GM10248 (cell line): ENCODE measurements at regions of chr7 and their contacts with region 1.

Region 1: DNA sequence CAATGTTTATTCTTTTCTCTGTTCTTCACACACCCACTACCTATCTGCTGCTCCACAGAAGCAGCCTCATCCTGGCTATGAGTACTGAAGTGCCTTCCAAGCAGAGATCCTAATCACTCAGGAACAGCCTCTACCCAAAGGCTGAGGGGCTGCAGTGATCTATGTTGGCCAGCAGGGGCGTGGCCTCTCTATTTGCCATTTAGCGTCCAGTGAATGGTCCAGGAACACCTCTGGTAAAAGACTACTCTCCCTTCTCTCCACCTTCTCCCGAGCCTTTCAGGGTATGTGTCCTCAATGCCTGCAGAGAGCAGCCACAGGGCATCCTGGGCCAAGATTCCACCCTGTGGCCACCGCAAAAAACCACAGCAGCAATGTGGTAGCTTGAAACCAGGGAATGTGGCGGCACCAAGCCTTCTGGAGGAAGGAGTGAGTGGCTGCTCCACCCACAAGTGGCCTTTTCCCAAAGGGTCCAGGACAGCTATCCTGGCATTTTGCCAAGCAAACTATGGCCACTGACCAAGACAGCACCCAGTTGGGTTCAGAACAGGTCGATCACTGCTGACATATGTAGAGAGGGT is 70.9 kb downstream of the SYPL1 start:
- DNase-seq: peak; percentile 66
- CTCF ChIP-seq: peak; percentile 58

Region 2: DNA sequence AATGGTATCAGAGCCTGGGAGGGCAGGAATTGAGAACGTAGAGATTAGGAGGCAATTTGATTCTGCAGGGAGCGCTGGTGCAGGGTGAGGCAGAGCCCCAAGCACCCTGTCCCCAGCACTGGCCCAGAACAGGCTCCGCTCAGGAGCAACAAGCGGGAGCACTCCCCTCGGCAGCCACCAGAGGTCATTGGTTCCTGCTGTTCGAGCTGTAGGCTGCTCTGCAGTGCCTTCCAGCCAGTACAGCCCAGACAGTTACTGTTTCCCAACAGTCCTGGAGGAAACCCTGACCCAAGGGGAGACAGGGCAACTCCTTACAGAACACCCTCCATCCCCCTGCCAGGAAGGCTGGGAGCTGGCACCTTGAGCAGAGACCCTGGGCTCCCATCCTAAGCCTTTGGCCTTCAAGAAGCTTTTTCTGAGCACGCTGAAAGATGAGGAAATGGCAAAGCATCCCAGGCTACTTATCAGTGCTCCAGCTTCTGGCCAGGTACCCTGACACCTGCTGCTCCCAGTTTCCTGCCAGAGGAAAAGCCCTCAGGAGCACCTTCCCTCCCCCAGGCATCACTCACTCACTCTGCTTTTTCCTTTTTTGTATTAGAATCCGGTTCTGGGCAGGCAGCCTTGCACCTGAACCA is 388.8 kb before region 1 on chr7:
- CTCF ChIA-PET with region 1: interaction called, 26 read pairs
- POLR2A ChIA-PET with region 1: no interaction called
- DNase-seq: peak; percentile 78
- CTCF ChIP-seq: peak; percentile 75

Region 3: DNA sequence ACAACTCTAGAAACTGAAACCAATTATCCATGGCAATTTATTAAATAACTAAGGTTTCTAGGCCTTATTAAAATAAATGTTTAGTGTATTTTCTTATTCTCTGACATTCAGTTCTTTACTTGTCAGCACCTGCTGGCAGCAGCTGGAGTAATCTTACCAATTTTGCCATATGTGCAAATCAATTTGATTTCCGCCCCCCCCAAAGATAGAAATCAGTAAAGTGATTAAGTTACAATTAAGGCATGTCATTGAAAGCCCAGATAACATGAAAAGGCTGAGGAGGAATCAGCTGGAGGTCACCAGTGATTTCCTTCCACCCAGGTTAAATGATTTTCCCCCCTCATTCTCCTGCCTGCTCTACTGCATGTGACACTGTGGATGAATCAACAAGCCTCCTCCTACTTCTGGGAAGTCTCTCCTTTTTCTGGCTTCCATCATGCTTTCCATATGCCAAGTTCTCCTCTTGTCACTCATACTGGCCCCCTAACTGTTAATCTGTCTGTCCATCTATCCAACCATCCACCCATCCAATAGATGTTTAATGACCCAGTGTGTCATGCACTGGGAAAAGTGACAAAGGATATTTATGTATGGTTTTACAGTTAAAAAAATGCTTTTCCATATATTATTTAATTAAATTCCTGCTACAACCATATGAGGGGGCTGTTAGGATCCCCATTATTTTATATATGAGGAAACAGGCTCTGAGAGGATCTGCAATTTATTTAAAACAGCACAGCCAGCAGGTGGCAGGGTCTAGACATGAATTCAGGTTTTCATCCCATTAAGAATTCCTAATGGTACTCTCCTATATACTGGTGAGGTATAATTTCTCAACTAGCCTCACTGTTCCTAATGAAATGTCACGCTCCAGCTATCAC is 281.3 kb before region 1 on chr7:
- CTCF ChIA-PET with region 1: interaction called, 61 read pairs
- POLR2A ChIA-PET with region 1: no interaction called
- DNase-seq: peak; percentile 22
- CTCF ChIP-seq: peak; percentile 62

Region 4: GRCh38 chr7:106023369-106024322 is 17.6 kb before region 1 on chr7:
- CTCF ChIA-PET with region 1: interaction called, 35 read pairs
- POLR2A ChIA-PET with region 1: no interaction called
- DNase-seq: no peak
- CTCF ChIP-seq: no peak

Region 5: DNA sequence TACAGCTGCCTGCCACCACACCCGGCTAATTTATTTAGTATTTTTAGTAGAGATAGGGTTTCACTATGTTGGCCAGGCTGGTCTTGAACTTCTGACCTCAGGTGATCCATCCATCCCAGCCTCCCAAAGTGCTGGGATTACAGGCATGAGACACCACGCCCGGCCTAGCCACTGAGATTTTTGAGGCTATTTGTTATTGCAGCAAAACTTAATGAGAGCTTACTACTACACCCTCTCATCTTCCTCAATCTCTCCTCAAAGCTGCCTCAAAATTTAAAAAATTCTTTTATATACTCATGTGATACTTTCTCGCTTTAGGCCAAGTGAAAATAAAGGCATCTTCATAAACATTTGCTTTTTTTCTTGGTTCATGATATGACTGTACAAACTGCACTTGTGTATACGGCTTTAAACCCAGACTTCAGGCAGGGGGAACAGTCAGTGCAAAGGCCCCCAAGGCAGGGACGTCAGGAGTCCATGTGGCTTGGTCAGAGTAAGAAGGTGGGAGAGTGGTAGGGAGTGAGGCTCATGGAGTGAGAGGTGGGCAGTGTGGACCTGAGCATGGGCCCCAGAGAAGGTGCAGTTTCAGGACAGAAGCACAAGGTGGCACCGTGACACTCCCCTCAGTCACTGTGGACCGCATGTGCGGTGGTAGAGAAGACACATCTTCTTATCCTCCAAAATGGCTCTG is 15.4 kb after region 1 on chr7:
- CTCF ChIA-PET with region 1: interaction called, 24 read pairs
- POLR2A ChIA-PET with region 1: no interaction called
- DNase-seq: peak; percentile 82
- CTCF ChIP-seq: peak; percentile 94

Region 6: DNA sequence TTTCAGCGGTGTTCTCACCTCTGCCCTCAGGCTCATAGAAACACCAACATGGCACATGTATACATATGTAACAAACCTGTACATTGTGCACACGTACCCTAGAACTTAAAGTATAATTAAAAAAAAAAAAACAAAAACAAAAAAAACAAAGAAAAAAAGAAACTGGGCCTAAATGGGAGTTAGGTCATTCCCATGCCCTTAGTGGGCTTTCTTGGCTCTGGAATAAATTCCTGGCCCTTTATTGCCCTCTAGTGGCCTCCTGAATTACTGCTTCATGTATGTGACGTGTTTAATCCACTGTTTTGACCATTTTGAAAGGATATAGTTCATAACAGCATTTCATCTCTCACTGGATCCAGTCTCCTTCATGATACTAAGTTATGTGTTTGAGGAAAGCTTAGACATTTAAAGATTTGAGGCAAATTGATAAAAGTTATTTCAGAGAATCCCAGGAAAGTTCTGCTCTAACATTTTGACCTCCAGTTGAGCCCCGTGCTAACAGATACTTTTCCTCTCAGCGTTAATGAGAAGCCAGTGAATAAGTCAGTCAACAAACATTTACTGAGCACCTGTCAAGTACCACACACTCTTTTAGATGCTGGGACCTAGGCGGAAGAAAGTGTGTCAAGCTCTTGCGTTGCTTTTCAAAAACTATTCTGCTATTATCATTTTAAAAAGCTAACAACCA is 125.6 kb after region 1 on chr7:
- CTCF ChIA-PET with region 1: interaction called, 12 read pairs
- POLR2A ChIA-PET with region 1: no interaction called
- DNase-seq: no peak
- CTCF ChIP-seq: peak; percentile 79

Region 7: GRCh38 chr7:106313456-106313901 is 272.2 kb after region 1 on chr7:
- CTCF ChIA-PET with region 1: no interaction called
- POLR2A ChIA-PET with region 1: no interaction called
- DNase-seq: no peak
- CTCF ChIP-seq: no peak